ENCODE measurements at regions of chr3 and their contacts with region 1.

Region 1: DNA sequence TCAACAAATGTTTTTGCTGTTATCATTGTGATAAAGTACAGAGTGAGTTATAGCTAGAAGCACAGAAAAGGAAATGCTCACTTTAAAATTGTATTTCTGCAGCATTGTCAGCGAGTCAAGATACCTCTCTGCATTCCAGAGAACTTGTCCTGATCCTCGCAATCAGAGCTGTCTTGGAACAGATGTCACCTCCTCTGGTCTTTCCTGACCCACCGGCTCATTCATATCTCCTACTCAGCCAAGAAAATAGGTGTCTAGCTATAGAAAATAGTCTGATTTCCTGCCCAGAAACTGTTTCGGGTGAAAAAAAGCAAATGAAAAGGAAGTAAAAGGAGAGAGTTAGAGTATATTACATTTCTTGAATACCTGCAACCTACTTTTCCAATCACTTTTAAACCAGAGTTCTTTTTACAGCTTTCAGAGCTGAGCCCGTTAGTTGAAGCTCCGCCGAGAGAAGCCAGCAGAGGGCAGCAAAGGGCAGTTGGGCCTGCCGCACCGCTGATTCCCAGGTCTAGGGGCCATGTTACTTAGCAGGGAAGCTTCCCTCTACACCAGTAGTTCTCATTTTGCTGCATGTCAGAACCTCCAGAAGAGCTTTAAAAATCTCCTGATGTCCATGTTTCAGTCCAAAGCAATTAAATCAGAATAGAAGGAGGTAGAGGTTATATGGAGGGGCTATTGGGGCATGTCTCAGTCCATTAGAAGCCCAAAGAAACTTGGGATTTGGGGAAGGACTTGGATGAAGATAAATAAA is 185.7 kb upstream of the THRB start:
- DNase-seq: peak; percentile 84
- H3K4me3 Mint-ChIP-seq: no peak overlapping the region
- H3K27ac Mint-ChIP-seq: no peak overlapping the region
- H3K4me1 Mint-ChIP-seq: peaks cover 20% of the 10 kb centered on the region
- H3K27me3 Mint-ChIP-seq: no peaks in the 10 kb centered on the region
- CTCF ChIP-seq: peak; percentile 83

Region 2: GRCh38 chr3:23888617-23889228 is 791.7 kb before region 1 on chr3:
- CTCF ChIA-PET with region 1: no interaction called
- intact Hi-C with region 1: loop called (anchors 2 kb)
- DNase-seq: peak; percentile 25
- H3K4me3 Mint-ChIP-seq: no peak overlapping the region
- H3K27ac Mint-ChIP-seq: no peak overlapping the region
- H3K4me1 Mint-ChIP-seq: no peaks in the 10 kb centered on the region
- H3K27me3 Mint-ChIP-seq: no peaks in the 10 kb centered on the region
- CTCF ChIP-seq: peak; percentile 49

Region 3: GRCh38 chr3:24069045-24069444 is 611.3 kb before region 1 on chr3:
- CTCF ChIA-PET with region 1: no interaction called
- intact Hi-C with region 1: loop called (anchors 10 kb)
- DNase-seq: peak; percentile 12
- H3K4me3 Mint-ChIP-seq: no peak overlapping the region
- H3K27ac Mint-ChIP-seq: no peak overlapping the region
- H3K4me1 Mint-ChIP-seq: no peaks in the 10 kb centered on the region
- H3K27me3 Mint-ChIP-seq: no peaks in the 10 kb centered on the region
- CTCF ChIP-seq: no peak

Region 4: DNA sequence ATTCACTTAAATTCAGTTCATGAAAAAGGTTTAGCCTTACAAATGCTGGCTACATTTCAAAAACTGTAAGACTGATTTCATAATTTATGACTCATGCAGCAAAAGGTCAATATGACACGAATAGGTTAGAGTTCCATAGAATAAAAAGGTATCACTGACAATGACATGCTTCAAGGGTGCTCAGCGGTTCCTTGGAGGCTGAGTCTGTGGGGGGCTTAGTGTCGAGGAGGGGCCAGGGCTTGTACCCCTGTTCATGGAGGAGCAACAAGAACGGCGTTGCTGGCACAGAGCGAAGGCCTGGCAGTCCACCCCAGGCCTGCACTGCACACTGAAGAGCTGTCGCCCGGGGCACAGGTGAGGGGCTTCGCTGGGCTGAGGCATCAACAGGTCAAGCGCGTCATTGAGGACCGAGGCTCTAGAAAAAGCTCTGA is 561.1 kb before region 1 on chr3:
- CTCF ChIA-PET with region 1: no interaction called
- intact Hi-C with region 1: no loop called
- DNase-seq: no peak
- H3K4me3 Mint-ChIP-seq: no peak overlapping the region
- H3K27ac Mint-ChIP-seq: peak overlapping the region; percentile 7
- H3K4me1 Mint-ChIP-seq: peaks cover 17% of the 10 kb centered on the region
- H3K27me3 Mint-ChIP-seq: no peaks in the 10 kb centered on the region
- CTCF ChIP-seq: no peak

Region 5: DNA sequence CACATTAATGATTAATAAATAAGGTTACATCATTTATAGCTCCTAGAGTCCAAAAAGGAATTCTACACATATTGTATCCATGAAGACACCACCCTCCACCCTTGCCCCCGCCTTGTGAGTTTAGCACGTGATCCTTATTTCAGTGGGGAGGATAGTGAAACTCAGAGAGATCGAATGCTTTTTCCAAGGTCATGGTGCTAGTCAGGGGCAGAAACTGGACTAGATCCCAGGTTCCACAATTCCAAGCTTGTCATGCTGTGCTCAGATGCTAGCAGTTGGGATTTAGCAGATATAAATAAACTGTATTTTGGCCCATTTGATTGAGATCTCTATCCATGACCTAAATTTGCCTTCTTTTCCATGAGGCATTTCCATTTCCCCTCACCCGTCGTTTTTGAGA is 41.7 kb after region 1 on chr3:
- CTCF ChIA-PET with region 1: no interaction called
- intact Hi-C with region 1: no loop called
- DNase-seq: no peak
- H3K4me3 Mint-ChIP-seq: no peak overlapping the region
- H3K27ac Mint-ChIP-seq: no peak overlapping the region
- H3K4me1 Mint-ChIP-seq: no peaks in the 10 kb centered on the region
- H3K27me3 Mint-ChIP-seq: no peaks in the 10 kb centered on the region
- CTCF ChIP-seq: no peak